ENCODE measurements at regions of chr6 and their contacts with region 1.

Region 1: DNA sequence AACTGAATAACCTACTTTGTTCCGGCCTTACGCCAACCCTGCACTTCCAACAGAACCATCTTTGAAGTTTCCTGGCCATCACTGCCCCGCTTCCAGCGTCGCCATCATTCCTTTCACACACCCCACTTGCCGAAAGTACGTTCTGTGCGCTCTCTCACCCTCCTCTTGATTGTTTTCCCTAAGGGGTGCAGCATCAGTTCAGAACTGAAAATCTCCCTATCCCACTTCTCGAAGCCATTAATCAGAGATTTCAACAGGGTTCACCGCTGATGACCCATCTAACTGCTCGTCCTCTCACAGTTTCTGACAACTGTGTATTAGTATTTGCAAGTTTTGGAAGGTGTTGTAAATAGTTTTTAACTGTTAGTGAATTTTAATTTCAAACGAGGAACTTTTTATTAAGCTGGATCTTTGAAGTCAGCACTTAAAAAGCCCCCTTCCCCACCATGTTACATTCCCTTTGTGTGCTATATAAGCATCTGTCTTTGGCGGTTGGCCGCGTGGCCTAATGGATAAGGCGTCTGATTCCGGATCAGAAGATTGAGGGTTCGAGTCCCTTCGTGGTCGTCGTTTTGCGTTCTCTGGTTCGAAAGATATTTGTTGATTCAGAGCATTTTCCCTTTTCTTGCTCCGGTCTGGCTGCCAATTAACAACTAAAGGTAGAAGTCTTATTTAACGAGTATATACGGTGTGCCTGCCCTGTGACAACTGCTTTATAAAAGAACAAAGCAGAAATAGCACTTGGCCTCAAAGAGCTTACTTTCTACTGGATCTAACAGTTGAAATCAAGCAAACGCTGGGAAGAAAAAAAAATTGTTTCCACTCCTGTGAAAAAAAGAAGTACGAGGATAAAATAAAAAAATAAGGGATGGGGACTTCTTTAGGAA is 42.6 kb downstream of the TRIM27 start:
- DNase-seq: peak in 13 of 14 experiments; percentile 27 to 71 (median 43)
- ATAC-seq: no peak
- H3K4me3 ChIP-seq: peak overlapping the region; percentile 39
- H3K4me3 Mint-ChIP-seq: peak overlapping the region; percentile 77
- H3K27ac ChIP-seq: no peak overlapping the region
- H3K27ac Mint-ChIP-seq: peak overlapping the region; percentile 81
- H3K4me1 ChIP-seq: peaks cover 24% of the 10 kb centered on the region
- H3K4me1 Mint-ChIP-seq: peaks cover 39% of the 10 kb centered on the region
- H3K27me3 ChIP-seq: no peaks in the 10 kb centered on the region
- H3K27me3 Mint-ChIP-seq: peaks cover 7% of the 10 kb centered on the region
- CTCF ChIP-seq: no peak

Region 2: DNA sequence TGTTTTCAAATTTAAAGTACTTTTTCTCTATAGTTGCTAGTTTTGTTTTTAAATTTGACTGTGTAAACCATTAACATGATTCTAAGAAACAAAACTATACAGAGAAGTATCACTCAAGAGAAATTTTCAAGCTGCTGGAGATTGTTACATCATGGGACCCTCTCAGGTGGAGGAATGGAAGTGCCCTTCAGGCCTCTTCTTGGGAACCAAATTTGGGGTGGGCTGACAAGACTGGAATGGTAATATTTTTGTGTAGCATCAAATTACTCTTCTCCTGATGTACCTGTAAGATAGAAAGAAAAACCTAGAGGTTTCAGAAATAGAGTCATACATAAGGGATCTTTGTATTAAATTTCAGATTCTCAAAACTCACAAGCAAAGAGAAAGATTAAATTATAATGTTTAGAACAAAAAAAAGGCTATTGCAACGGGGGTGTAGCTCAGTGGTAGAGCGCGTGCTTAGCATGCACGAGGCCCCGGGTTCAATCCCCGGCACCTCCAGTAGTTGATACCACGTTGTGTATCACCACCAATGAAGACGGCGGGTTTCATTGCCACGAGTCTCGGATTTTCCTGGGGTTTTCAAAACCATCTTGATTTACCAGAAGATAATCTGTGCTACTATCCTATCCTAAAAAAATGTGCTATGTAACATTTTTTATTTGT is 161.7 kb before region 1 on chr6:
- CTCF ChIA-PET with region 1: no interaction called
- POLR2A ChIA-PET with region 1: no interaction called
- intact Hi-C with region 1: no loop called
- DNase-seq: no peak
- ATAC-seq: no peak
- H3K4me3 ChIP-seq: no peak overlapping the region
- H3K4me3 Mint-ChIP-seq: no peak overlapping the region
- H3K27ac ChIP-seq: no peak overlapping the region
- H3K27ac Mint-ChIP-seq: no peak overlapping the region
- H3K4me1 ChIP-seq: no peaks in the 10 kb centered on the region
- H3K4me1 Mint-ChIP-seq: no peaks in the 10 kb centered on the region
- H3K27me3 ChIP-seq: peaks cover 4 to 38% of the 10 kb centered on the region in 2 experiments
- H3K27me3 Mint-ChIP-seq: peaks cover 88% of the 10 kb centered on the region
- CTCF ChIP-seq: no peak

Region 3: GRCh38 chr6:28758046-28758817 is 122.9 kb before region 1 on chr6:
- CTCF ChIA-PET with region 1: no interaction called
- POLR2A ChIA-PET with region 1: no interaction called
- intact Hi-C with region 1: no loop called
- DNase-seq: no peak
- ATAC-seq: no peak
- H3K4me3 ChIP-seq: no peak overlapping the region
- H3K4me3 Mint-ChIP-seq: no peak overlapping the region
- H3K27ac ChIP-seq: no peak overlapping the region
- H3K27ac Mint-ChIP-seq: no peak overlapping the region
- H3K4me1 ChIP-seq: no peaks in the 10 kb centered on the region
- H3K4me1 Mint-ChIP-seq: no peaks in the 10 kb centered on the region
- H3K27me3 ChIP-seq: peaks cover 17 to 52% of the 10 kb centered on the region in 2 experiments
- H3K27me3 Mint-ChIP-seq: peaks cover 77% of the 10 kb centered on the region
- CTCF ChIP-seq: no peak

Region 4: GRCh38 chr6:28863604-28864320 is 17.4 kb before region 1 on chr6:
- CTCF ChIA-PET with region 1: interaction called, 13 read pairs
- POLR2A ChIA-PET with region 1: interaction called, 154 read pairs
- intact Hi-C with region 1: loop called (anchors 1 to 2 kb)
- DNase-seq: peak; percentile 69 to 93 (median 80)
- ATAC-seq: peak; percentile 39
- H3K4me3 ChIP-seq: peak overlapping the region; percentile 82
- H3K4me3 Mint-ChIP-seq: peak overlapping the region; percentile 88
- H3K27ac ChIP-seq: peak overlapping the region; percentile 30 to 47
- H3K27ac Mint-ChIP-seq: peak overlapping the region; percentile 93
- H3K4me1 ChIP-seq: peaks cover 34% of the 10 kb centered on the region
- H3K4me1 Mint-ChIP-seq: peaks cover 51% of the 10 kb centered on the region
- H3K27me3 ChIP-seq: no peaks in the 10 kb centered on the region
- H3K27me3 Mint-ChIP-seq: peaks cover 7% of the 10 kb centered on the region
- CTCF ChIP-seq: peak; percentile 10

Region 5: DNA sequence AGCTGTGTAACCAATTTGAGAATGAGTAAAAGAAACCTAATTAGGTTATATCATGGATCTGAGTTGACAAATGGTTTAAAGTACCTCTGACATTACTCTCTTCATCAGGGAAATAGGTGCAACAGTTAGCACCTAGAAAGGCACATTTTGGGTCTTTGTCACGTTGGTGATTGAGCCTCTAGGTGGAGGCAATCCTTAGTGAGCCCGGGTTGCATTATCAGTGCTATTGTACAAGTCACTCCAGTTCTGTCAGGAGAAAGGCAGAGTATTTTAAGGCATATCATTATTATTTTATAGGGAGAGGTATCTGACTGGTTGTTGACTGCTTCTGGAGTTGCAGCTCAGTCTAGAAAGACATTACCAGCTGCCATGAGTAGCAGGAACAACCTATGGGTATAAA is 12.3 kb before region 1 on chr6:
- CTCF ChIA-PET with region 1: interaction called, 13 read pairs
- POLR2A ChIA-PET with region 1: interaction called, 154 read pairs
- intact Hi-C with region 1: loop called (anchors 1 to 2 kb)
- DNase-seq: no peak
- ATAC-seq: no peak
- H3K4me3 ChIP-seq: no peak overlapping the region
- H3K4me3 Mint-ChIP-seq: peak overlapping the region; percentile 3
- H3K27ac ChIP-seq: no peak overlapping the region
- H3K27ac Mint-ChIP-seq: peak overlapping the region; percentile 93
- H3K4me1 ChIP-seq: peaks cover 22% of the 10 kb centered on the region
- H3K4me1 Mint-ChIP-seq: peaks cover 38% of the 10 kb centered on the region
- H3K27me3 ChIP-seq: no peaks in the 10 kb centered on the region
- H3K27me3 Mint-ChIP-seq: no peaks in the 10 kb centered on the region
- CTCF ChIP-seq: no peak

Measured in CD4-positive, alpha-beta T cell (primary cell).